SK-N-SH (cell line): ENCODE measurements at regions of chr3 and their contacts with region 1.

Region 1: DNA sequence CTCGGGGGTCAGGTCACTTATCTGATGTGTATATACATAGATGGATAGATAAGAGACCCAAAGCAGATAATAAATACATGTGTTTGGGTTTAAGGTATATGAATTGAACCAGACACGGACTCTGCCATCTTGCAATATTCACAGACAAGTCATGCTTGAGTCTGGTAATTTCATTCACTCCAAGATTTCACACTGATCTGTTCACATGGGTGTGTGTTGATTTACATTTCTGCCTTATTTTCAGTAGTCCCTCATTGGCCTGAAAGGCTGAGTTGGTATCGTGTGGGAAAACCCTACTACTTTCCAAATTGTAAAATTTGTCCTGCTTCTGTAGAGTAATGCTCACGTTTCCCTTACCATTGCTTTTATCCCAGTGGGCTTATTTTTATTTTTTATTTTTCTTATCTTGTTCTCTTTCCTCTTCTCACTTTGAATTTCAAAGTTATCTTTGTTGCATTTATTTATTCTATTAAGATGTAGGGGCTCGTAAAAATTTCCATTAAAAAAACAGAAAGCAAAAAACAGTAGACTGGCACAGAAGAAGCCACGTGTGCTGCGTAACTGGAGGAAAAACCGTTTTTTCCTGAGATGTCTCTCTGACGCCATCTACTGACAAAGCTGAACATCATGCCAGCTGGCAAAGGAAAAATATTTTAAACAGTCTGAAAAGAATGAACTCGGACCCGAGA is 10.8 kb upstream of the MFSD1 start:
- DNase-seq: peak; percentile 45
- H3K4me3 ChIP-seq: peak overlapping the region in 1 of 2 experiments; percentile 33; a peak in 1 of 4 replicates
- H3K27ac ChIP-seq: no peak overlapping the region
- H3K4me1 ChIP-seq: peaks cover 0 to 17% of the 10 kb centered on the region in 2 experiments; a peak in 3 of 4 replicates
- H3K27me3 ChIP-seq: no peaks in the 10 kb centered on the region
- CTCF ChIP-seq: peak; percentile 92
- EP300 ChIP-seq: no peak
- RAD21 ChIP-seq: peak; percentile 90

Region 2: DNA sequence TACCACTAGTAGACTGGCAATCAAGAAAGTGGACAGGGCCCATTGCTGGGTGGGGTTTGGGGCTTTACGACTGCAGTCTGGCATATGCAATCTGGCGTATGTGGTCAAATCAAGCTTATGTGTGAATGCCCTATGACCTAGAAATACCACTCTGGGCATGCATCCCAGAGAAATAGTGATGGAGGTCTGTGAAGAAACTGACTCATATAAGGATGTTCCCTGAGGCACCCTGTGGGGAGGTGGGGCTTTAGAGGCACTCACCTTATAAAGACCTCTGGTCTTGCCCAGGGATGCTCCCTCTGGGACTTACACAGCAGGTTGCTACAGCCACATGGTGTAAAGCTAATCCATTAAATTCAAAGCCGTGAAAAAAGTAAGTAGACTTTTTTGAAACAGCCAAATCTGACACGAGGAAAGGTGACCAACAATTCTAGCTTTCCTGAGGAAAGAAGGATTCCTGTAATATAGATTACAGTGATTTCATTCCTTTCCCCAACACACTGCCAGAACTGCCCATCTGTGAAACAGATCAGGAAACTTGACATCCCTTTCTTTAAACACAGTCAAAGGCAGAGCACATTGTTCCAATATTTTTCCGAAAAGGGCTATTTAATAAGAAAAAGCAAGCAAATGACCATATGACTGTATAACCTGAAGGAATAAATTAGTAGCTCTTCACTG is 72.4 kb before region 1 on chr3:
- CTCF ChIA-PET with region 1: interaction called, 11 read pairs
- POLR2A ChIA-PET with region 1: no interaction called
- DNase-seq: no peak
- H3K4me3 ChIP-seq: no peak overlapping the region
- H3K27ac ChIP-seq: peak overlapping the region in 1 of 2 experiments; percentile 6; a peak in 1 of 4 replicates
- H3K4me1 ChIP-seq: peaks cover 12 to 29% of the 10 kb centered on the region in 2 experiments; a peak in 3 of 4 replicates
- H3K27me3 ChIP-seq: no peaks in the 10 kb centered on the region
- CTCF ChIP-seq: no peak
- EP300 ChIP-seq: peak in 1 of 2 experiments; percentile 22; a peak in 1 of 4 replicates
- RAD21 ChIP-seq: no peak

Region 3: GRCh38 chr3:158801696-158802408 is 10.8 kb after region 1 on chr3 and contains the start of gene MFSD1:
- CTCF ChIA-PET with region 1: interaction called, 48 read pairs
- POLR2A ChIA-PET with region 1: no interaction called
- DNase-seq: peak; percentile 94
- H3K4me3 ChIP-seq: peak within 1 kb of the TSS; percentile 87 to 95
- H3K27ac ChIP-seq: peak within 1 kb of the TSS; percentile 58 to 62; a peak in 3 of 4 replicates
- H3K4me1 ChIP-seq: peaks cover 8 to 14% of the 10 kb centered on the region in 2 experiments; a peak in 3 of 4 replicates
- H3K27me3 ChIP-seq: no peaks in the 10 kb centered on the region
- CTCF ChIP-seq: no peak
- EP300 ChIP-seq: peak in 1 of 2 experiments; percentile 38; a peak in 1 of 4 replicates
- RAD21 ChIP-seq: no peak
- polyA plus RNA-seq, gene MFSD1: 44.9 and 70.4 TPM in 2 replicates